H1 (cell line): ENCODE measurements at regions of chr14 and their contacts with region 1.

Region 1: DNA sequence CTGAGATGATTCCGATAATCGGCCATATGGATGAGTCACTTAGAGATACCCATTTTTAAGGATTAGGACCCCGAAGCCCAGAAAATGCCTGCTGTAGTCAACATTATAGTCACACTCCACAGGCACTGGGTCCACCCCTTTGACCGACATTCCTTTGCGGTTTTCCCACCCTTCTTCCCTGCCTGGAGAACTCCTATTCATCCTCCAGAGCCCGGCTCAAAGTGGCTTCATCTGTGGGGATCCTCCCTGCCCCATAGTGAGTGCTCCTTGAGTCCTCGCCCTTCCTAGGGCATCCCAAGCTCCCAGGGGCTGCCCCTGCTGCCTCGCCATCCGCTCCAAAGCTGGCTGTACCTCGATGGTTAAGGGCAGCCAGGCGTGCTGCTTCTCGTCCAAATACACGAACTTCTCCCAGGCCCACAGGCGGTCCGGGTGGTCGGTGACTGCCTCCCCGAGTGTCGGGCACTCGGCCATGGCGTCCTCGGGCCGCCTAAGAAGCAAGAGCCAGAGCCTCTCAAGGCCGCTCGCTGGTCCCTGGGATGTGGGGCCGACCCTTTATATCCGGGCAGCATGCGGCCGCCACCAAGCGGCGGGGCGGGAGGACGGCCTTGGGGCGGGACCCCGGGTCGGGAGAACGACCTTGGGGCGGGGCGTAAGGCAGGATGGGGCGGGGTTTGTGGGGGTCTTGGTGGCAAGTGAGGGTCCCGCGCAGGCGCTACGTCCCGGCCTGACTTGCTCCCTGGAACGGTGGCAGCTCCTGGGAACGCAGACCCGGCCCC is at the start of gene TCL1A:
- DNase-seq: peak in 1 of 2 experiments; percentile 67
- H3K4me3 ChIP-seq: peak within 1 kb of the TSS in 1 of 4 experiments; percentile 26; a peak in 1 of 8 replicates
- H3K27ac ChIP-seq: no peak within 1 kb of the TSS
- H3K4me1 ChIP-seq: peaks cover 2 to 9% (median 4%) of the 10 kb centered on the region in 4 experiments
- H3K27me3 ChIP-seq: peaks cover 0 to 9% (median 3%) of the 10 kb centered on the region in 4 experiments; a peak in 4 of 7 replicates
- CTCF ChIP-seq: peak in 1 of 3 experiments; percentile 37; a peak in 2 of 4 replicates
- EP300 ChIP-seq: no peak
- POLR2A ChIP-seq: no peak
- RAD21 ChIP-seq: peak; percentile 14 to 52; a peak in 3 of 4 replicates
- total RNA-seq, gene TCL1A: 0.35 and 0.65 TPM in 2 replicates

Region 2: GRCh38 chr14:95365401-95365800 is 348.4 kb before region 1 on chr14:
- CTCF ChIA-PET with region 1: no interaction called
- POLR2A ChIA-PET with region 1: no interaction called
- DNase-seq: no peak
- H3K4me3 ChIP-seq: no peak overlapping the region
- H3K27ac ChIP-seq: no peak overlapping the region
- H3K4me1 ChIP-seq: peaks cover 7 to 30% (median 21%) of the 10 kb centered on the region in 4 experiments
- H3K27me3 ChIP-seq: peaks cover 0 to 2% (median 0%) of the 10 kb centered on the region in 4 experiments; a peak in 3 of 7 replicates
- CTCF ChIP-seq: no peak
- EP300 ChIP-seq: no peak
- POLR2A ChIP-seq: no peak
- RAD21 ChIP-seq: no peak

Region 3: GRCh38 chr14:95725685-95726336 is 12.0 kb after region 1 on chr14:
- CTCF ChIA-PET with region 1: interaction called, 14 read pairs
- POLR2A ChIA-PET with region 1: interaction called, 3 read pairs
- DNase-seq: peak in 1 of 2 experiments; percentile 11
- H3K4me3 ChIP-seq: no peak overlapping the region
- H3K27ac ChIP-seq: no peak overlapping the region
- H3K4me1 ChIP-seq: no peaks in the 10 kb centered on the region
- H3K27me3 ChIP-seq: no peaks in the 10 kb centered on the region
- CTCF ChIP-seq: no peak
- EP300 ChIP-seq: no peak
- POLR2A ChIP-seq: no peak
- RAD21 ChIP-seq: no peak